ENCODE measurements at regions of chr16 and their contacts with region 1.

Region 1: DNA sequence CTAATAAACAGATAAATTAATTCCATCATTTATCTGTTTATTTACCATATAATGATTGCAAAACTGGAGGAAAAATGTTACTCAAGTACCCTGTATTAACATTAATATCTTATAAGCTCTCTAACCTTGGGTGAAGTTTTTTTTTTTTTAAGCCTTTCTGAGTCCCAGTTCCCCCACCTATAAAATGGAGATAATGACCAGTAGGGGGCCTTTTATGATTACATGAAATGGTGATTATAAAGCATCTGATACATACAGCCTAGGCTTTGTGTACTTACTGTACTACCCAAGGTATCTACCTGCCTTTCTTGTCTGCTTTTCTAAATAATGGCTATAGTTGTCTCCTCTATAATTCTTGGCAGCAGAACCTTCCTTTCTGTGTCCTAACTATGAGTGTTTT is 22.6 kb downstream of the LRRC36 start:
- DNase-seq: no peak
- ATAC-seq: peak; percentile 45
- H3K4me3 Mint-ChIP-seq: no peak overlapping the region
- H3K27ac Mint-ChIP-seq: no peak overlapping the region
- H3K4me1 Mint-ChIP-seq: no peaks in the 10 kb centered on the region
- H3K27me3 Mint-ChIP-seq: peaks cover 9% of the 10 kb centered on the region
- CTCF ChIP-seq: peak; percentile 52

Region 2: DNA sequence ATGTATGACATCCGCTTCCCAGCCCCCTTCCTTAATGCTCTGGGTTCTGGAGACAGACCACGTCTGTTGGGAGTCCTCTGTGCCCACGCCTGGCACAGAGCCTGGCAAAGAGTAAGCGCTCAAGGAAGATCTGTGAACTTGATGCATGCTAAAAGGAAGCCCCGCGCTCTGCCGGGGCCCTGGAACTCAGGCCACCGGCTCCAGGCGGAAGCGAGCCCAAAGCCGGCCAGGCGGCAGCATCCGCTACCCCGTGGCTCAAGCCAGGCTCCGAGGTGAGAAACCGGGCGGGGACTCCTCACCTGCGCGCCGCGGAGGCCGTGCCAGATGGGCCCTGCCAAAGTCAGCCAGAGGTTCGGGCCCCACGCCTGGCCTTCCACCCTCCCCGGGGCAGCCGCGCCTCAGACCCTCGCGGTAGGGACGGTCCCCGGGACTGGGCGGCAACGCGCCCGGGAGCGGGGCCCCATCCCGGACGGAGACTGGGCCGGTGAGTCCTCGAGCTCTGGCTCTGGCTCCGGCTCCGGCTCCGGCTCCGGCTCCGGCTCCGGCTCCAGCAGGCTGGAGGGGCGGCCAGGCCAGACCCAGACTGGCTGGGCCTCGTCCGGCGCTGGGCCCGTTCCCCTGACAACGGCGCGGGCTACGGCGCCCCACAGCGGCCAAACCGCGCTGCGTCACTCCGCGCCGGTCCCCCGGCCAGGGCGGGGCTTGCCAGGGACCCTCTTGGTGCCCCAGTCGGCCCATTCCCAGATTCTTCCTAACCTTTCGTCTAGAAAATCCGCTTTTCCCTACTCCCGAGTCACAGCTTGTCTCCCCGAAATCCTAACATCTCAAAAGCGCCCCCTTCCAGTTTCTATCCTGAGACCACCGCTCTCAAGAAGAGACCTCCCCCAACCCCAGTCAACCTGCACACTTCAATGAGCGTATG is 67.0 kb after region 1 on chr16 and contains the start of gene ZDHHC1:
- CTCF ChIA-PET with region 1: no interaction called
- POLR2A ChIA-PET with region 1: no interaction called
- intact Hi-C with region 1: loop called (anchors 5 kb)
- DNase-seq: peak; percentile 73
- ATAC-seq: peak; percentile 97
- H3K4me3 Mint-ChIP-seq: peak within 1 kb of the TSS; percentile 85
- H3K27ac Mint-ChIP-seq: peak within 1 kb of the TSS; percentile 59
- H3K4me1 Mint-ChIP-seq: peaks cover 8% of the 10 kb centered on the region
- H3K27me3 Mint-ChIP-seq: peaks cover 10% of the 10 kb centered on the region
- CTCF ChIP-seq: no peak
- total RNA-seq, gene ZDHHC1: 2.8 and 3.8 TPM in 2 replicates